Activated CD4-positive, alpha-beta T cell treated with anti-CD3 and anti-CD28 coated beads, Interleukin-2, amount 10 ng/mL, durations not matched to agents 24 days and 14 days (primary cell): ENCODE measurements at regions of chr5 and their contacts with region 1.

Region 1: DNA sequence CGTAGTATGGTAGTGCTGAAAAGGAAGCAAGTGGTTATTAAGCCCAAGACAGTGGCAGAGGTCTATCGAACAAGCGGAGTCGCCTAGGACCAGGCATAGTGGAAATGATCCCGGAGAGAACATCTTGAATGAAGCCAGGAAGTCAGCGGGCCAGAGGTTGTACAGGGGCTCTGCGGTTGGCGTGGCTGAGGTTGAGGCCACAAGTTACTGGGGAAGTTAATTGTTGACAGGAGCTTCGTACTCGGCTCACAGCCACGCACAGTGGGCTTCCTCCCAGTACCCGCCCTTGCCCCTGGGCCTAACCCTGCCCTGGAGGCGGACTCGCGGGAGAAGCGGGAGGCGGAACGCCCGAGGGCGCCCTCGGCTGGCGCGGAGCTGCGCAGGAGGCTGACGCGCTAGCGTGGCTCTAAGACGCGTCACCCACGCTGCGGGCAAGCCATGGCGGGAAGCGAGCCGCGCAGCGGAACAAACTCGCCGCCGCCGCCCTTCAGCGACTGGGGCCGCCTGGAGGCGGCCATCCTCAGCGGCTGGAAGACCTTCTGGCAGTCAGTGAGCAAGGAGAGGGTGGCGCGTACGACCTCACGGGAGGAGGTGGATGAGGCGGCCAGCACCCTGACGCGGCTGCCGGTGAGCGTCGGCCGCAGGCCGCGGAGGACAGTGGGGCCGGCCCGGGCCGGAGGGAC is at the start of gene FBXO4:
- DNase-seq: peak; percentile 97
- H3K4me3 Mint-ChIP-seq: peak within 1 kb of the TSS; percentile 92
- H3K27ac Mint-ChIP-seq: peak within 1 kb of the TSS; percentile 98
- H3K4me1 Mint-ChIP-seq: peaks cover 17% of the 10 kb centered on the region
- H3K27me3 Mint-ChIP-seq: no peaks in the 10 kb centered on the region
- total RNA-seq, gene FBXO4: 16.8 and 19.9 TPM in 2 replicates

Region 2: GRCh38 chr5:41067714-41068568 is 857.1 kb before region 1 on chr5:
- intact Hi-C with region 1: no loop called
- DNase-seq: no peak
- H3K4me3 Mint-ChIP-seq: no peak overlapping the region
- H3K27ac Mint-ChIP-seq: no peak overlapping the region
- H3K4me1 Mint-ChIP-seq: peaks cover 1% of the 10 kb centered on the region
- H3K27me3 Mint-ChIP-seq: no peaks in the 10 kb centered on the region

Region 3: DNA sequence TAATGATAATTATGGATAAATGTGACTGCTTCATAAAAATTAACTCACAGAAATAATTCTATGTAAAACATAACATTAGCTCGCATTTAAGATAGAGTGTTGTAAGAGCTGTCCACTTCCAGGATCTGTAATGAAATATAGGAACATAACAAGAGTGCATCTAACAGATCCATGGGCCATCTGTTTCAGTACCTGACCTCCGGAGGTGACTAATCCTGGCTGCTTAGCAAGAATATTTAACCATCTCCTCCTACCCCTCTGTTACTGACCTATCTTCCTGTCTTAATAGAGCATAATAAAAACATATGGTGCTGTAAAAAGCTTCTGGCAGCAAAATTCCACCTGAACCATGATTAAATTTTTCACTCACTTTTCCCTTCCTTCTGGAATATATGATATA is 421.7 kb before region 1 on chr5:
- intact Hi-C with region 1: no loop called
- DNase-seq: no peak
- H3K4me3 Mint-ChIP-seq: no peak overlapping the region
- H3K27ac Mint-ChIP-seq: no peak overlapping the region
- H3K4me1 Mint-ChIP-seq: no peaks in the 10 kb centered on the region
- H3K27me3 Mint-ChIP-seq: peaks cover 1% of the 10 kb centered on the region

Region 4: DNA sequence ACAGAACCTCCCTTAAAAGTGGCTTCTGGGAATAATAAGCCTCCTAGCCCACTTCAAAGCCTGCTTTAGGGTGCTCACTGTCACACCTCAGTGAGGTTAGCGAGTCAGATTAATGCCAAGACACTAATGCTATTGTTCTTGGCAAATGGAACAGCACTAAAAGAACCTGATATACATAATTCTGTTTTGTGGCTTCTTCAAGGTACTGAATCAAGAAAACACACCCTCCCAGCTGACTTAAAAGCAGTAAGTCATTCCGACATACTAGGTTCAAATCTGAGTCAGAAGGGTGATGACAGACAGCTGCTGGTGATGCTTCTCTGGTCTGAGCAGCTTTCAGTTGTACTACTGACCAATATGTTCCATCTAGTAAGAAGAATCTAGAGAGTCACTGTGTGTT is 176.4 kb before region 1 on chr5:
- intact Hi-C with region 1: loop called (anchors 1 kb)
- DNase-seq: no peak
- H3K4me3 Mint-ChIP-seq: no peak overlapping the region
- H3K27ac Mint-ChIP-seq: no peak overlapping the region
- H3K4me1 Mint-ChIP-seq: peaks cover 24% of the 10 kb centered on the region
- H3K27me3 Mint-ChIP-seq: no peaks in the 10 kb centered on the region

Region 5: GRCh38 chr5:41869739-41870626 is 55.0 kb before region 1 on chr5 and contains the start of gene OXCT1:
- intact Hi-C with region 1: loop called (anchors 1 kb)
- DNase-seq: peak; percentile 98
- H3K4me3 Mint-ChIP-seq: peak within 1 kb of the TSS; percentile 92
- H3K27ac Mint-ChIP-seq: peak within 1 kb of the TSS; percentile 85
- H3K4me1 Mint-ChIP-seq: peaks cover 48% of the 10 kb centered on the region
- H3K27me3 Mint-ChIP-seq: no peaks in the 10 kb centered on the region
- total RNA-seq, gene OXCT1: 92.6 and 93.4 TPM in 2 replicates

Region 6: DNA sequence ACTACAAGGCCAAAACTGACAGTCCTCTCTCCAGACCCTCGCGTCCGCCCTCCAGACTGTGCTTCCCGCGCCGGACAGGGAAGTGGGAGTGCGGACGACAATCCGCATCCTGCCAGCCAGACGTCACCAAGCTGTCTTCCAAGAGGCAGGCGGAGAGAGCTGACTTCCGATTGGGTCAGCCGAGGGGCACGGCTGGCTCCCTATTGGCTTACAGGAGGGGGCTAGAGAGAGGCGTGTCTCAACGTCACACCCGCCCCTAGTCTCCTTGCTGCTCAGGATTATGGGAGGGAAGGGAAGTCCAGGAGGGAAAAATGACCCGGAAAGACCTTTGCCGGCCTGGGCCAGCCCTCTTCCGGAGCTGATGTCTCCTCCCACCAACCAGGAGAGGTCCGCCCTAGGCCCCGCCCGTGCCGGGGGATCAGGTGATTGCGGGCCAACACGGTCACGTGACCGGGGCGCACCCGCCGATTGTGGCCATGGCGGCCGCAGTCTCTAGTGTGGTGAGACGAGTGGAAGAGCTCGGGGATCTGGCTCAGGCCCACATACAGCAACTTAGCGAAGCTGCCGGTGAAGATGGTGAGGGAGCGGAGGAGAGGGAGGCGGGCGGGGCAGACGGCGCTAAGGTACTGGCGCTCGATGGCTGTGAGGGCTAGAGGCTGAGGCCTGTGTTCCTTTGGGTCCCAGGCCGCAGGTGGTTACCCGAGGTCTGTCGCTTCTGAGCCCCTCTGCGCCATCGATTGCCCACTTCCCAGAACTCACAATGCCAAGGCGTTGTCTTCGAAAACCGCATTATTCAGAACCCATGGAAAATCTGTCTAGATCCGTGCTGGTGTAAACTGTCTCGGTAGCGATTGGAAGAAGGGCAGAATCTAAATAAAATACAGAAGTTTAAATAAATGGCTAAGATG is 20.9 kb before region 1 on chr5 and contains the start of gene RIMOC1:
- intact Hi-C with region 1: loop called (anchors 1 kb)
- DNase-seq: peak; percentile 100
- H3K4me3 Mint-ChIP-seq: peak within 1 kb of the TSS; percentile 92
- H3K27ac Mint-ChIP-seq: peak within 1 kb of the TSS; percentile 96
- H3K4me1 Mint-ChIP-seq: peaks cover 43% of the 10 kb centered on the region
- H3K27me3 Mint-ChIP-seq: peaks cover 9% of the 10 kb centered on the region
- total RNA-seq, gene RIMOC1: 29.6 and 31.7 TPM in 2 replicates